ENCODE measurements at regions of chr6 and their contacts with region 1.

Region 1: DNA sequence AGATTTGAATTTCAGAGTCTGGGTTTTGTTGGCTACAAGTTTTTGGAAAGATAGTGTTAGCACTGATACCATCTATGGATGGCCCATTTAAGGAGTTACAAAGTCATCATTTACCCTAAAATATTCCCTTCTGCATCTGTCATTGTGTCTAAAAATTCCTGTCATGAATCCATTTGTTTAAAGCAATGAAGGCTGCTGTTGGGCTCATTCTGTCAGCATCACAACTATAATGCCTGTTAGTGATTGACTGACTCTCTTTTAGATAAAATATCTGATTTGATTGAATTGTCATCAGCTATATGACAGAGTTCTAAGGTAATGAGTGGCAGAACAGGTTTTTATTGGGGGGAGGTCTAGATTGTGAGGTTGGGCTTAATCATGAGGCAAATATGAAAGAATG is 167.6 kb upstream of the IMPG1 start:
- DNase-seq: no peak
- H3K4me3 ChIP-seq: no peak overlapping the region
- H3K27ac ChIP-seq: no peak overlapping the region
- H3K4me1 ChIP-seq: no peaks in the 10 kb centered on the region
- H3K27me3 ChIP-seq: no peaks in the 10 kb centered on the region
- CTCF ChIP-seq: no peak
- POLR2A ChIP-seq: no peak

Region 2: DNA sequence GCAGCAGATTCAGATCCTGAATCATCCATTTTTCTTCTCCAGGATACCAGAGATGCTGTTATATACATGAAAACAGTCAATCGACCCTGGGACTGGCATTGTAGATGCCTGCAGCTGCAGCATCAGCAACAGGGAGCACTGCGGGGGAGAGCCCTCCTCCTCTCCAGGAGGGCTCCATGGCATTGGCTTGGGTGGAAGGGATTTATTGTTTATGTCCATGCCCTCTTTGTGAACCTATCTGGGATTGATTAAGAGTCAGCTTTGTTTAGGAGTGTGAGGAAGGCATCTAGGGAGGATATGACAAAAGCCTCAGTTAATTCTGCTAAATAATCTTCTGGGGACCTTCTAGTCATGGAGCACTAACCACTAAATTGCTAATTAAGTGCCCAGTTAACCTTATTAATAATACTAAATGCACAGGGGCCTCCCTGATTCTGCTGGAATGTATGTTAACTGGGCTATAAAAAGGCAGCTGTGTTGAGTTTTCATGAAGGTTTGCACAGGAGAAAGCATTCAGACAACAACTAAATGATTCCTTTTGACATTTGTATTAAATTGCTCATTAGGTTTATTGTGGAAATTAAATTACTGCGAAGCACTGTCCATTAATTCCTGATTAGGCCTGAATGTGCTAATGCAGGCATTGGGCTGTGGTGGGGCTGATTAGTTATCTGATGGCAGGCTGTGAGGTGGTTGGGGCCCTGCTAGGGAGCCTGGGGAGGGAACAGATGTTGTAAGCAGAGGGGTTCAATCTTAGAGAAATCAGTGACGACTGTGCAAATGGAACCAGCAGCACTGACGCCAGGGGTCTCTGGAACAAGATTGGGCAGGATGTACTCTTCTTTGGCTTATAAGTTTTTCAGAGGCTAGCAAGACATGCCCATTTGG is 225.2 kb before region 1 on chr6:
- intact Hi-C with region 1: no loop called
- DNase-seq: no peak
- H3K4me3 ChIP-seq: no peak overlapping the region
- H3K27ac ChIP-seq: no peak overlapping the region
- H3K4me1 ChIP-seq: no peaks in the 10 kb centered on the region
- H3K27me3 ChIP-seq: no peaks in the 10 kb centered on the region
- CTCF ChIP-seq: no peak
- POLR2A ChIP-seq: no peak

Region 3: GRCh38 chr6:76250666-76251065 is 10.6 kb after region 1 on chr6:
- intact Hi-C with region 1: loop called in 1 of 2 experiments (anchors 1 kb)
- DNase-seq: no peak
- H3K4me3 ChIP-seq: no peak overlapping the region
- H3K27ac ChIP-seq: no peak overlapping the region
- H3K4me1 ChIP-seq: no peaks in the 10 kb centered on the region
- H3K27me3 ChIP-seq: no peaks in the 10 kb centered on the region
- CTCF ChIP-seq: no peak
- POLR2A ChIP-seq: no peak

Measured in adrenal gland (tissue), 19 donors.